Astrocyte of the cerebellum (primary cell): ENCODE measurements at regions of chr5 and their contacts with region 1.

Region 1: DNA sequence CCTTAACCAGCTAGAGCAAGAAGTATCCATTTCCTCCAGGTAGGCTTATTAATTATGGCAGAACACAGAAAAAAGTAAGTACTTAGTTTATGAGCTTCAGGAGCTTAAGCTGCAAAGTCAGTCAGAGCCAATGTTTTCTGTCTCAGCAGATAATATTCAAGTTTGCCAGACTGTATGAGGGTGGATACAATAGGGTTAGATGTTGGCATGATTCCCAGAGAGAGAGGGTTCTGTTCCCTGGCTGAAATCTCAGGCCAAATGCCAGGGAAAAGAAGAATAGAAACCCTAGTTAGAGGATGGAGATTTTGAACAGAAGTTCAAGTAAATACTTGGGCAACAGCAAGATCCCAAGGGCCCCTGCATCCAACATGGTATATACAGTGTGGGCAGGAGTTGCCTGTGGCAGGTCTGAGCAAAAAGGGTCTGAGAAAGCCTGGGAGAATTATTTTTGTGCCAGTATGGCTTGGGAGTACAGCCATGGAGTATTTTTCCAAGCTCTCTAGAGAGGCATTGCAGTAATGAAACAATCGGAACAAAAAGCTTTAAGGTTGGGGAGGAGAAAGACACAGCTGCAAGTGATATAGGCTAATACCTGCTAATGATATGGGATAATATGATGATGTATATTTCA is 31.0 kb upstream of the ISOC1 start:
- DNase-seq: peak; percentile 57
- H3K4me3 ChIP-seq: no peak overlapping the region
- CTCF ChIP-seq: no peak

Region 2: GRCh38 chr5:129018837-129019236 is 44.8 kb before region 1 on chr5:
- in situ Hi-C with region 1: no loop called
- DNase-seq: no peak
- H3K4me3 ChIP-seq: no peak overlapping the region
- CTCF ChIP-seq: no peak

Region 3: DNA sequence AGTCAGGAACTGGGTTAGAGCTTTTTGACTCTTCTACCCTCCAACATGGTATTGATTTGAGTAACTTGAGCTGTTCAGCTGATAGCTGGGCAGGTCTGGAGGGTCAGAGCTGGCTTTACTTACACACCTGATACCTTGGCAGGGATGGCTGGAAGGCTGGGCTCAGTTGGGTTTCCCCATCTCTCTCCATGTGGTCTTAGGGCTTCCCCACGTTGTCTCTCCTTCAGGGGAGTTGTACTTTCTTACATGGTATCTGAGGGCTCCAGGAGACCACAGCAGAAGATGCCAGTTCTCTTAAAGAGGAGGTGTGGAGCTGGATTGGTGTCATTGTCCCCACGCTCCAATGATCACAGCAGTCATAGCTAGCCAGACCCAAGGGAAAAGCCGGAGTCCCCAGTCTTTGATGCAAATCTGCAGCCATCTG is 56.6 kb after region 1 on chr5:
- in situ Hi-C with region 1: no loop called
- DNase-seq: no peak
- H3K4me3 ChIP-seq: no peak overlapping the region
- CTCF ChIP-seq: no peak

Region 4: DNA sequence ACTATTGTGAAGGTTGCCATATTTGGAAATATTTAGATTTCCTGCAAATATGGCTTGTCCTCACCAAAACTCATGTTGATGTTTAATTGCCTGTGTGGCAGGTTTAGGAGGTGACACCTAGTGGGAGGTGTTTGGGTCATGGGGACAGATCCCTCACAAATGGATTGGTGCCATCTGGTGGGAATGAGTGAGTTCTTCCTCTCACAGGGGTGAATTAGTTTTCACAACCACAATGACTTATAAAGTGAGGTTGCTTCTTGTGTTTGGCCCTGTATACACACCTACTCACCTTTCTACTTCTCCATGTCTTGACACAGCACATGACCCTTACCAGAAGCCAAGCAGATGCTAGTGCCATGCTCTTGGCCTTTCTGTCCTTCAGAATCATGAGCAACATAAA is 72.0 kb after region 1 on chr5:
- in situ Hi-C with region 1: loop called (anchors 10 kb)
- DNase-seq: no peak
- H3K4me3 ChIP-seq: no peak overlapping the region
- CTCF ChIP-seq: no peak

Region 5: GRCh38 chr5:129204525-129204924 is 140.9 kb after region 1 on chr5:
- in situ Hi-C with region 1: no loop called
- DNase-seq: no peak
- H3K4me3 ChIP-seq: no peak overlapping the region
- CTCF ChIP-seq: no peak

Region 6: GRCh38 chr5:130616161-130616560 is 1552.6 kb after region 1 on chr5:
- in situ Hi-C with region 1: no loop called
- DNase-seq: no peak
- H3K4me3 ChIP-seq: no peak overlapping the region
- CTCF ChIP-seq: no peak